ENCODE measurements at regions of chr15 and their contacts with region 1.

Region 1: GRCh38 chr15:60397772-60398445 is at the start of gene ANXA2:
- DNase-seq: peak; percentile 82 to 91 (median 83)
- H3K4me3 ChIP-seq: peak within 1 kb of the TSS; percentile 59 to 86
- H3K4me3 Mint-ChIP-seq: peak within 1 kb of the TSS; percentile 92 to 98 (median 94)
- H3K27ac ChIP-seq: peak within 1 kb of the TSS; percentile 75
- H3K27ac Mint-ChIP-seq: peak within 1 kb of the TSS; percentile 96 to 100 (median 98)
- H3K4me1 ChIP-seq: peaks cover 60% of the 10 kb centered on the region
- H3K4me1 Mint-ChIP-seq: peaks cover 27 to 64% (median 49%) of the 10 kb centered on the region in 4 donors
- H3K27me3 ChIP-seq: no peaks in the 10 kb centered on the region
- H3K27me3 Mint-ChIP-seq: peaks cover 0 to 7% of the 10 kb centered on the region in 2 donors
- total RNA-seq, gene ANXA2: 148 to 160 TPM

Region 2: DNA sequence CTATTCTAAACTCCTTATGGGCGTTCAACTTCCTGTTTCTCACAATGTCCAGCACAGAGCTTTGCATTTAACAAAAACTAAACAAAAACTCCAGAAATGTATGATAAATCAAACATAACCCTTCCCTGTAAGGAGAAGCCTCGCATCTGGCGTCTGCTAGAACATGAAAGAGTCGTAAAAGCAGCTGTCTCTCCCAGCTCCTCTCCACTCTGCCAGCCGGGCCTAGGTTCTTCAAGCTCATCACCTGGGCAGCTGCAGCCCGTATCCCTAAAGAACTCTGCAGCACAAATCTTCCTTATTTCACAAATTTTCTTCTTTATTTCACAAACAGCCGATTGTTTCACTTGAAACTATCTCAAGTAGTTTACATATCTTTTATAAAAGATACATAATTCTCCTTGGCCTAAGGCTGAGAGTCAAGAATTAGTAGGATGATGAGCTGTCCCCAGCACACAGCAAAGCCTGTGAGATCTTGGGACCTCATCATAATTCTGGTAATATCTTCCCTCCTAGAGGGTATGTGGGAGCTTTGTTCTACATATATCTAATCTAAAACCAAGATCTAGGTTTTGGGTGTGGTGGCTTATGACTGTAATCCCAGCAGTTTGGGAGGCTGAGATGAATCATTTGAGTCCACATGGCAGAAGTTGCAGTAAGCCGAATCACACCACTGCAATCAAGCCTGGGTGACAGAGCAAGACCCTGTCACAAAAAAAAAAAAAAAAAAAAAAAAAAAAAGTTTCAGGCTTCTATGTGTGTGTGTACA is 35.4 kb before region 1 on chr15:
- CTCF ChIA-PET with region 1: interaction called, 4 read pairs
- POLR2A ChIA-PET with region 1: interaction called, 13 read pairs
- intact Hi-C with region 1: no loop called
- DNase-seq: peak; percentile 3 to 49 (median 22)
- H3K4me3 ChIP-seq: no peak overlapping the region
- H3K4me3 Mint-ChIP-seq: peak overlapping the region in 1 of 8 donors; percentile 49
- H3K27ac ChIP-seq: no peak overlapping the region
- H3K27ac Mint-ChIP-seq: peak overlapping the region; percentile 17 to 87 (median 81)
- H3K4me1 ChIP-seq: peaks cover 25% of the 10 kb centered on the region
- H3K4me1 Mint-ChIP-seq: peaks cover 21 to 39% (median 29%) of the 10 kb centered on the region in 4 donors
- H3K27me3 ChIP-seq: no peaks in the 10 kb centered on the region
- H3K27me3 Mint-ChIP-seq: no peaks in the 10 kb centered on the region

Region 3: DNA sequence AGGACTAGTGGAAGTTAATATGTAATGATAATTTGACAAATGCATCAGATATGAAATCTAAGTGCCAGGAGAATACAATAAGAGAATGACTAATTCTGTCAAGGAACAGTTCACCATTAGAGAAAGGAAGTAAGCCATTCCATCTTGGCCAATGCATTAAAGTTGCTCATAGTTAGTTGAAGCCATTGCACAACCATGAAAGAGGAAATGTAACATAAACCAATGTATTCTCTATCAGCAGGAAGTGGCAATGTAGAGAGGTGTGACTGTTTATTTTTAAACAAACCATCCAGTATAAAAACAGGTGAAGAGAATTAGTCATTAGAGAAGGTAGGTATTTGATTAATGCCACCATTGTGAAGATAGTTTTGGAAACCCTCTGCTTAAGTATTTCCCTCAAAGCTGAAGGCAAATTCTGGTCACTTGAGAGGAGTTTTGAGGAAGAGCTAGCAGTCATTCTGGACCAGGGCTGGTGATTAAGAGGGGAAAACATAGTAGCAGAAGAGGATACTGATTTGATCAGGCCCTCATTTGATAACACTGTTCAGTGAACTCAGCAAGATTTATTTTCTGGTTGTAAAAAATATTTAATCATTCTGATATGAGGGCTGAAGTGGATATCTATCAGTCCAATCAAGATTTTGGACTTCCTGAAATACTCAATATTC is 10.7 kb after region 1 on chr15:
- CTCF ChIA-PET with region 1: interaction called, 3 read pairs
- POLR2A ChIA-PET with region 1: interaction called, 68 read pairs
- intact Hi-C with region 1: loop called (anchors 2 kb)
- DNase-seq: peak in 4 of 5 donors; percentile 17 to 40 (median 31)
- H3K4me3 ChIP-seq: no peak overlapping the region
- H3K4me3 Mint-ChIP-seq: peak overlapping the region in 6 of 8 donors; percentile 27 to 83 (median 65)
- H3K27ac ChIP-seq: no peak overlapping the region
- H3K27ac Mint-ChIP-seq: peak overlapping the region; percentile 8 to 93 (median 77)
- H3K4me1 ChIP-seq: peaks cover 19% of the 10 kb centered on the region
- H3K4me1 Mint-ChIP-seq: peaks cover 11 to 21% (median 14%) of the 10 kb centered on the region in 4 donors
- H3K27me3 ChIP-seq: no peaks in the 10 kb centered on the region
- H3K27me3 Mint-ChIP-seq: no peaks in the 10 kb centered on the region

Region 4: DNA sequence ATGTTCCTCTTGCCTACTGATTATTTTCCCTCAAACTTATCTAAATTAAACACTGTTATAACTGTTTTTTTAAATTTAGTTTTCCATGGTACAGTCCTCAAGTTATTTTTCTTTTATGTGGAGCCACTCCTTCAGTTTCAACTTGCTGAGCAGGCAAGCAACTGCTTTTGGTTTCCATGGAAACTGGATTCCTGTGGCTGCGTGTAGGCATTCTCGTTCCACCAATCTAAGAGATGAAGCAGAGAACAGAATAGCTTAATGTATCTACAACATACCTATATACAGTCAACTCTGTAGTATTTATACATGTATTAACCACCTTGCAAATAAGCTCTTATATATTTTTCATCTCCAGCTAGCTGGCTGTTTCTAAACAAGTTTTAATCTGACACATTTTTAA is 25.6 kb after region 1 on chr15:
- CTCF ChIA-PET with region 1: no interaction called
- POLR2A ChIA-PET with region 1: interaction called, 15 read pairs
- intact Hi-C with region 1: no loop called
- DNase-seq: no peak
- H3K4me3 ChIP-seq: no peak overlapping the region
- H3K4me3 Mint-ChIP-seq: no peak overlapping the region
- H3K27ac ChIP-seq: no peak overlapping the region
- H3K27ac Mint-ChIP-seq: peak overlapping the region in 4 of 7 donors; percentile 23 to 82 (median 48)
- H3K4me1 ChIP-seq: no peaks in the 10 kb centered on the region
- H3K4me1 Mint-ChIP-seq: peaks cover 0 to 5% (median 4%) of the 10 kb centered on the region in 4 donors
- H3K27me3 ChIP-seq: no peaks in the 10 kb centered on the region
- H3K27me3 Mint-ChIP-seq: no peaks in the 10 kb centered on the region

Region 5: DNA sequence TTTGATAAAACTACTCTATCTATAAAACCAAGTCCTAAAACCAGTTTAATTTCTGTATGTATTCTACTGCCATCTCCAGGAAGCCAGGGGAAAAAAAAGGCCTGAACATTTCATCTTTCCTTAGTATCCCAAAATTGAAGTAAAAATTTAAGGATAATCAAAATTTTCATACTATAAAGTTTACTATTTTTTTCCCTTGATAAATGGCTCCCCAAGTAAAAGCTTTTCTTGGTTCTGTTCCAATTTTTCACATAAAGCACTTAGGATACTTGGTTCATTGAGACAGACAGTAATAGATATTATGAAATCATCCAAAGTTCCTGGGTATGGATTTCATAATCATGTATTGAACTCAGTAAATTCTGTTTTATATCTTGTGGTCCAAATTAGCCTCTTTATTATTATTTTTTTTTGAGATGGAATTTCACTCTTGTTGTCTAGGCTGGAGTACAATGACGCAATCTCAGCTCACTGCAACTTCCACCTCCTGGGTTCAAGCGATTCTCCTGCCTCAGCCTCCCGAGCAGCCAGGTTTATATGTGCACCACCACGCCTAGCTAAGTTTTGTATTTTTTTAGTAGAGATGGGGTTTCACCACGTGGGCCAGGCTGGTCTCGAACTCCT is 46.5 kb after region 1 on chr15:
- CTCF ChIA-PET with region 1: interaction called, 10 read pairs
- POLR2A ChIA-PET with region 1: interaction called, 6 read pairs
- intact Hi-C with region 1: no loop called
- DNase-seq: peak in 2 of 5 donors; percentile 1 to 3
- H3K4me3 ChIP-seq: no peak overlapping the region
- H3K4me3 Mint-ChIP-seq: no peak overlapping the region
- H3K27ac ChIP-seq: no peak overlapping the region
- H3K27ac Mint-ChIP-seq: no peak overlapping the region
- H3K4me1 ChIP-seq: no peaks in the 10 kb centered on the region
- H3K4me1 Mint-ChIP-seq: peaks cover 0 to 4% (median 0%) of the 10 kb centered on the region in 4 donors
- H3K27me3 ChIP-seq: no peaks in the 10 kb centered on the region
- H3K27me3 Mint-ChIP-seq: no peaks in the 10 kb centered on the region

Region 6: DNA sequence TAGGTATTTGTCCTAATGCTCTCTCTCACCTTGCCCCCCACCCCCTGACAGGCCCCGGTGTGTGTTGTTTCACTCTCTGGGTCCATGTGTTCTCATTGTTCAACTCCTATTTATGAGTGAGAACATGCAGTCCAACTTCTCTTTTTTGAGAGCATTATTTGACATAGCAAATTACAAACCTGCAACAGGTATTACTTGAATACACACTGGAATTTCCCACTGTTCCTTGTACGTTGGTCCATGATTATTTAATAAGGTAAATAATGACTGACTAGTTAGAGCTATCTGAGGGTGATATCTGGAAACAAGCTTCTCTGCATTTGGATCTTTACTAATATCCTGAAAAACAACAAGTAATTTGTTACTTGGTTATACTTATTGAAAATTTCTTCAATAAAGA is 56.9 kb after region 1 on chr15:
- CTCF ChIA-PET with region 1: no interaction called
- POLR2A ChIA-PET with region 1: no interaction called
- intact Hi-C with region 1: loop called (anchors 5 kb)
- DNase-seq: no peak
- H3K4me3 ChIP-seq: no peak overlapping the region
- H3K4me3 Mint-ChIP-seq: no peak overlapping the region
- H3K27ac ChIP-seq: no peak overlapping the region
- H3K27ac Mint-ChIP-seq: peak overlapping the region in 1 of 7 donors; percentile 42
- H3K4me1 ChIP-seq: no peaks in the 10 kb centered on the region
- H3K4me1 Mint-ChIP-seq: no peaks in the 10 kb centered on the region
- H3K27me3 ChIP-seq: no peaks in the 10 kb centered on the region
- H3K27me3 Mint-ChIP-seq: no peaks in the 10 kb centered on the region

Region 7: GRCh38 chr15:60478566-60479360 is 80.9 kb after region 1 on chr15 and contains the start of gene ICE2:
- CTCF ChIA-PET with region 1: no interaction called
- POLR2A ChIA-PET with region 1: interaction called, 30 read pairs
- intact Hi-C with region 1: loop called (anchors 1 kb)
- DNase-seq: peak; percentile 93 to 97 (median 94)
- H3K4me3 ChIP-seq: peak within 1 kb of the TSS; percentile 72 to 85
- H3K4me3 Mint-ChIP-seq: peak within 1 kb of the TSS; percentile 91 to 100 (median 98)
- H3K27ac ChIP-seq: peak within 1 kb of the TSS; percentile 88
- H3K27ac Mint-ChIP-seq: peak within 1 kb of the TSS; percentile 96 to 100 (median 99)
- H3K4me1 ChIP-seq: peaks cover 38% of the 10 kb centered on the region
- H3K4me1 Mint-ChIP-seq: peaks cover 37 to 55% (median 46%) of the 10 kb centered on the region in 4 donors
- H3K27me3 ChIP-seq: no peaks in the 10 kb centered on the region
- H3K27me3 Mint-ChIP-seq: no peaks in the 10 kb centered on the region
- total RNA-seq, gene ICE2: 63.7 to 68.4 TPM

Measured in CD4-positive, alpha-beta memory T cell (primary cell).